ENCODE measurements at regions of chr9 and their contacts with region 1.

Region 1: GRCh38 chr9:31445960-31446359 is 938.5 kb upstream of the ACO1 start:
- DNase-seq: no peak
- ATAC-seq: no peak
- H3K4me3 ChIP-seq: no peak overlapping the region
- H3K4me3 Mint-ChIP-seq: no peak overlapping the region
- H3K27ac ChIP-seq: no peak overlapping the region
- H3K27ac Mint-ChIP-seq: no peak overlapping the region
- H3K4me1 ChIP-seq: no peaks in the 10 kb centered on the region
- H3K4me1 Mint-ChIP-seq: peaks cover 3 to 15% (median 12%) of the 10 kb centered on the region in 7 donors
- H3K27me3 ChIP-seq: no peaks in the 10 kb centered on the region
- H3K27me3 Mint-ChIP-seq: no peaks in the 10 kb centered on the region

Region 2: GRCh38 chr9:31325778-31326177 is 120.2 kb before region 1 on chr9:
- CTCF ChIA-PET with region 1: no interaction called
- POLR2A ChIA-PET with region 1: no interaction called
- intact Hi-C with region 1: no loop called
- DNase-seq: no peak
- ATAC-seq: no peak
- H3K4me3 ChIP-seq: no peak overlapping the region
- H3K4me3 Mint-ChIP-seq: no peak overlapping the region
- H3K27ac ChIP-seq: no peak overlapping the region
- H3K27ac Mint-ChIP-seq: peak overlapping the region in 8 of 9 donors; percentile 54 to 95 (median 80)
- H3K4me1 ChIP-seq: peaks cover 18 to 32% of the 10 kb centered on the region in 2 donors
- H3K4me1 Mint-ChIP-seq: peaks cover 10 to 51% (median 47%) of the 10 kb centered on the region in 7 donors
- H3K27me3 ChIP-seq: no peaks in the 10 kb centered on the region
- H3K27me3 Mint-ChIP-seq: no peaks in the 10 kb centered on the region

Region 3: DNA sequence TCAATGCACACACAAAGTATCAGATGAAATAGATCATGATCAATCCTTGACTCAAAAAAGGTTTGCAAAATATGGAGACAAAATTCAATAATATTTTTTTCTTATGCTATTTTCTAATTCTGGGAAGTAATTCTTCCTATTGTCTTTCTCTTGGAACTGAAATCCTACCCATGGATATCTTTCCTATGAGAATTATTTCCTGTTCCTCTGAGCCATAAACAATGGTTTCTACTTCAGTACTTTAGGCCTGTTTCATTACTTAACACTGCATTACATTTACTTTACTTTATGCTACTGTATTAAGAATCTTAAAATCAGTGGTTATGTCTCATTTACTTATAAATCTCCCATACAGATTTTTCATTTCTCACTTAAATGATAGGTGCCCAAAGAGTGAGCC is 86.9 kb before region 1 on chr9:
- CTCF ChIA-PET with region 1: no interaction called
- POLR2A ChIA-PET with region 1: no interaction called
- intact Hi-C with region 1: no loop called
- DNase-seq: no peak
- ATAC-seq: no peak
- H3K4me3 ChIP-seq: no peak overlapping the region
- H3K4me3 Mint-ChIP-seq: no peak overlapping the region
- H3K27ac ChIP-seq: no peak overlapping the region
- H3K27ac Mint-ChIP-seq: peak overlapping the region in 2 of 9 donors; percentile 52 to 69
- H3K4me1 ChIP-seq: no peaks in the 10 kb centered on the region
- H3K4me1 Mint-ChIP-seq: no peaks in the 10 kb centered on the region
- H3K27me3 ChIP-seq: no peaks in the 10 kb centered on the region
- H3K27me3 Mint-ChIP-seq: peaks cover 0 to 8% (median 0%) of the 10 kb centered on the region in 5 donors

Region 4: DNA sequence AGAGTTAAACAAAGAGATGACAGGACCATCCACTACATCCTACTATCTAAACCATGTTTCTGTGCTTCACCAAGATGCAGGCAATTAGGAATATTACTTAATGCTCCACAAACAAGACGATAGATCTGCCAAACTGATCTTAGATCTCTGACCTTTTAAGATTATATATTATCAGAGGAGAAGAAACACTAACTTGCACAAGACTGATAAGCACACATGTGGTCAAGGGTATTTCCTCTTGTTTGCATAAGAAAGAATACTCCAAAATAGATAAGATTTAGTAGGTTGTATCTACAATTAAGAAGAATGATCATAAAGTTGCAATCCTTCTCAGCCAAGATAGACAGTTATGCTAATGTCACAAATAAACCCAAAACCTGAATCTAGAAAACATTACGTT is 337.5 kb after region 1 on chr9:
- CTCF ChIA-PET with region 1: no interaction called
- POLR2A ChIA-PET with region 1: no interaction called
- intact Hi-C with region 1: loop called in 1 of 2 experiments (anchors 10 kb)
- DNase-seq: no peak
- ATAC-seq: peak; percentile 44
- H3K4me3 ChIP-seq: no peak overlapping the region
- H3K4me3 Mint-ChIP-seq: no peak overlapping the region
- H3K27ac ChIP-seq: no peak overlapping the region
- H3K27ac Mint-ChIP-seq: no peak overlapping the region
- H3K4me1 ChIP-seq: no peaks in the 10 kb centered on the region
- H3K4me1 Mint-ChIP-seq: peaks cover 0 to 14% (median 6%) of the 10 kb centered on the region in 7 donors
- H3K27me3 ChIP-seq: no peaks in the 10 kb centered on the region
- H3K27me3 Mint-ChIP-seq: peaks cover 0 to 2% (median 0%) of the 10 kb centered on the region in 5 donors